Naive thymus-derived CD4-positive, alpha-beta T cell (primary cell): ENCODE measurements at regions of chr15 and their contacts with region 1.

Region 1: GRCh38 chr15:42495361-42496212 is at the start of gene SNAP23:
- DNase-seq: peak; percentile 66 to 87 (median 80)
- ATAC-seq: peak; percentile 93
- H3K4me3 ChIP-seq: peak within 1 kb of the TSS; percentile 88
- H3K4me3 Mint-ChIP-seq: peak within 1 kb of the TSS; percentile 94 to 99 (median 97)
- H3K27ac ChIP-seq: peak within 1 kb of the TSS; percentile 79
- H3K27ac Mint-ChIP-seq: peak within 1 kb of the TSS; percentile 90 to 99 (median 96)
- H3K4me1 ChIP-seq: peaks cover 14 to 17% of the 10 kb centered on the region in 2 donors
- H3K4me1 Mint-ChIP-seq: peaks cover 43 to 92% (median 80%) of the 10 kb centered on the region in 7 donors
- H3K27me3 ChIP-seq: no peaks in the 10 kb centered on the region
- H3K27me3 Mint-ChIP-seq: peaks cover 0 to 2% (median 0%) of the 10 kb centered on the region in 5 donors
- total RNA-seq, gene SNAP23: 60.0 to 80.0 (median 70.6) TPM

Region 2: GRCh38 chr15:42548253-42549031 is 52.9 kb after region 1 on chr15 and contains the starts of genes HAUS2 and LRRC57:
- CTCF ChIA-PET with region 1: no interaction called
- POLR2A ChIA-PET with region 1: interaction called, 18 read pairs
- intact Hi-C with region 1: loop called (anchors 1 kb)
- DNase-seq: peak; percentile 79 to 93 (median 86)
- ATAC-seq: peak; percentile 89
- H3K4me3 ChIP-seq: peak within 1 kb of the TSS; percentile 86
- H3K4me3 Mint-ChIP-seq: peak within 1 kb of the TSS; percentile 93 to 99 (median 96)
- H3K27ac ChIP-seq: peak within 1 kb of the TSS; percentile 93
- H3K27ac Mint-ChIP-seq: peak within 1 kb of the TSS; percentile 95 to 99 (median 97)
- H3K4me1 ChIP-seq: peaks cover 21 to 23% of the 10 kb centered on the region in 2 donors
- H3K4me1 Mint-ChIP-seq: peaks cover 29 to 62% (median 51%) of the 10 kb centered on the region in 7 donors
- H3K27me3 ChIP-seq: no peaks in the 10 kb centered on the region
- H3K27me3 Mint-ChIP-seq: no peaks in the 10 kb centered on the region
- total RNA-seq, gene HAUS2: 12.0 to 35.4 (median 16.8) TPM
- total RNA-seq, gene LRRC57: 15.4 to 37.1 (median 18.0) TPM

Region 3: GRCh38 chr15:42581272-42581730 is 85.7 kb after region 1 on chr15:
- CTCF ChIA-PET with region 1: no interaction called
- POLR2A ChIA-PET with region 1: interaction called, 11 read pairs
- intact Hi-C with region 1: loop called in 1 of 2 experiments (anchors 1 kb)
- DNase-seq: peak; percentile 63 to 80 (median 77)
- ATAC-seq: peak; percentile 98
- H3K4me3 ChIP-seq: peak overlapping the region; percentile 33
- H3K4me3 Mint-ChIP-seq: peak overlapping the region; percentile 85 to 96 (median 90)
- H3K27ac ChIP-seq: peak overlapping the region; percentile 71
- H3K27ac Mint-ChIP-seq: peak overlapping the region; percentile 77 to 97 (median 89)
- H3K4me1 ChIP-seq: peaks cover 8 to 11% of the 10 kb centered on the region in 2 donors
- H3K4me1 Mint-ChIP-seq: peaks cover 20 to 51% (median 37%) of the 10 kb centered on the region in 7 donors
- H3K27me3 ChIP-seq: no peaks in the 10 kb centered on the region
- H3K27me3 Mint-ChIP-seq: peaks cover 4 to 32% (median 10%) of the 10 kb centered on the region in 5 donors

Region 4: GRCh38 chr15:42736793-42737528 is 241.4 kb after region 1 on chr15 and contains the start of gene CDAN1:
- CTCF ChIA-PET with region 1: no interaction called
- POLR2A ChIA-PET with region 1: no interaction called
- intact Hi-C with region 1: loop called (anchors 2 to 5 kb)
- DNase-seq: peak; percentile 80 to 95 (median 87)
- ATAC-seq: peak; percentile 97
- H3K4me3 ChIP-seq: peak within 1 kb of the TSS; percentile 65
- H3K4me3 Mint-ChIP-seq: peak within 1 kb of the TSS; percentile 79 to 90 (median 86)
- H3K27ac ChIP-seq: peak within 1 kb of the TSS; percentile 87
- H3K27ac Mint-ChIP-seq: peak within 1 kb of the TSS; percentile 78 to 91 (median 86)
- H3K4me1 ChIP-seq: peaks cover 5 to 6% of the 10 kb centered on the region in 2 donors
- H3K4me1 Mint-ChIP-seq: peaks cover 13 to 26% (median 20%) of the 10 kb centered on the region in 7 donors
- H3K27me3 ChIP-seq: no peaks in the 10 kb centered on the region
- H3K27me3 Mint-ChIP-seq: no peaks in the 10 kb centered on the region
- total RNA-seq, gene CDAN1: 25.8 to 38.0 (median 28.3) TPM

Region 5: GRCh38 chr15:43105778-43106485 is 610.3 kb after region 1 on chr15 and contains the start of gene UBR1:
- CTCF ChIA-PET with region 1: no interaction called
- POLR2A ChIA-PET with region 1: no interaction called
- intact Hi-C with region 1: loop called in 1 of 2 experiments (anchors 1 kb)
- DNase-seq: peak; percentile 65 to 91 (median 89)
- ATAC-seq: peak; percentile 94
- H3K4me3 ChIP-seq: peak within 1 kb of the TSS; percentile 86
- H3K4me3 Mint-ChIP-seq: peak within 1 kb of the TSS; percentile 86 to 99 (median 95)
- H3K27ac ChIP-seq: peak within 1 kb of the TSS; percentile 99
- H3K27ac Mint-ChIP-seq: peak within 1 kb of the TSS; percentile 97 to 99 (median 98)
- H3K4me1 ChIP-seq: peaks cover 21 to 24% of the 10 kb centered on the region in 2 donors
- H3K4me1 Mint-ChIP-seq: peaks cover 40 to 56% (median 52%) of the 10 kb centered on the region in 7 donors
- H3K27me3 ChIP-seq: no peaks in the 10 kb centered on the region
- H3K27me3 Mint-ChIP-seq: peaks cover 0 to 5% (median 0%) of the 10 kb centered on the region in 5 donors
- total RNA-seq, gene UBR1: 38.4 to 51.7 (median 48.0) TPM